ENCODE measurements at regions of chr3 and their contacts with region 1.

Region 1: GRCh38 chr3:172341482-172342059 is 106.7 kb downstream of the GHSR start:
- DNase-seq: peak; percentile 51
- CTCF ChIP-seq: peak; percentile 52

Region 2: DNA sequence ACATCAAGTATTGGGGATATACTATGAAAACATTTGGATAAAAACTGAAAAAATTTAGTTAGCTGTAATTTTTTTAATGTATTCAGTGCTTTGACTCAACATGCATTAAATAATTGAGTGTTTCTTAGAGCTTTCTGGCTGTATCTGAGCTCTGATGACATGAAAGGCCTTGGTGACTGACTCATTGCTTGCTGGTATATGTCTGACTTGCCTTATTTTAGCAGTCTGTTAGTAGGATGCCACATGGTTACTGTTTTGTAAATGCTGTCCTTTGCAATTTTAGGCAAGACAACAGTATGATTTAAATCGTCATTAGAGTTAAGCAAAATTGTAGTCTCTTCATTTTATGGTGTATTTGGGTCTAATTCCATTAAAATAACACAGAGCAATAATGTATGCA is 92.5 kb before region 1 on chr3:
- CTCF ChIA-PET with region 1: no interaction called
- POLR2A ChIA-PET with region 1: no interaction called
- DNase-seq: no peak
- CTCF ChIP-seq: no peak

Region 3: GRCh38 chr3:172317984-172318383 is 23.6 kb before region 1 on chr3:
- CTCF ChIA-PET with region 1: interaction called, 16 read pairs
- POLR2A ChIA-PET with region 1: no interaction called
- DNase-seq: peak; percentile 44
- CTCF ChIP-seq: no peak

Region 4: GRCh38 chr3:172323894-172324610 is 17.5 kb before region 1 on chr3:
- CTCF ChIA-PET with region 1: interaction called, 16 read pairs
- POLR2A ChIA-PET with region 1: no interaction called
- DNase-seq: peak; percentile 31
- CTCF ChIP-seq: no peak

Region 5: DNA sequence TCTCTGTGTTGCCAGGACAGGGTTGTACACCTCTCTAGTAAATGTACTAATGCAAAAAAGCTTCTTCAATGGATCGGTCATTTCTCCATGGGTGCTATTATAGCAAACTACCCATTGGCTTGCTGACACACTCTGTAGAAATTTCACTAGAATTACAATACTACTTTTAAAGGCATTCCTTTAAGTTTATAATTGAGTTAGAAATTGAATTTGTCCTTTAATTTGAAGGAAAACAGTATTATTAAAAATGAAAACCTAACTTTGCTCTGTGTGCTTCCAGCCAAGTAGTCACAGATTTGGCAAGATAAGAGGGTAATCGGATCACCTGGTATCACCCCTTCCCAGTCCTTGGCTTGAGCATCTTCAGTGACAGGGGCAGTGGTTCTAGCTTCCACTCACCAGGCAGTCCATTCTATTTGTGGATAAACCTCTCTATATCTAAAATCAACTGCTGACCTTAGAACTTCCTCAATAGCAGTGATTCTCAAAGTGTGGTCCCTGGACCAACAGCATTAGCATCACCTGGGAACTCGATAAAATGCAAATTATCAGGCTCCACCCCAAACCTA is 13.4 kb after region 1 on chr3:
- CTCF ChIA-PET with region 1: interaction called, 41 read pairs
- POLR2A ChIA-PET with region 1: no interaction called
- DNase-seq: no peak
- CTCF ChIP-seq: no peak

Region 6: GRCh38 chr3:172666873-172667694 is 325.5 kb after region 1 on chr3:
- CTCF ChIA-PET with region 1: interaction called, 12 read pairs
- POLR2A ChIA-PET with region 1: no interaction called
- DNase-seq: peak; percentile 65
- CTCF ChIP-seq: peak; percentile 75

Measured in GM10248 (cell line).